Gastrocnemius medialis (tissue), 4 donors: ENCODE measurements at regions of chrX and their contacts with region 1.

Region 1: GRCh38 chrX:104098151-104098808 is 14.0 kb upstream of the ZCCHC18 start:
- DNase-seq: peak; percentile 4 to 14
- ATAC-seq: peak in 1 of 2 donors; percentile 60
- H3K4me3 ChIP-seq: no peak overlapping the region
- H3K27ac ChIP-seq: no peak overlapping the region
- H3K4me1 ChIP-seq: no peaks in the 10 kb centered on the region
- H3K27me3 ChIP-seq: peaks cover 0 to 7% (median 0%) of the 10 kb centered on the region in 3 donors
- CTCF ChIP-seq: peak; percentile 48 to 70 (median 52)
- POLR2A ChIP-seq: no peak

Region 2: GRCh38 chrX:104113222-104113965 is 15.1 kb after region 1 on chrX:
- in situ Hi-C with region 1: no loop called
- intact Hi-C with region 1: loop called (anchors 2 kb)
- DNase-seq: peak; percentile 2 to 21
- ATAC-seq: peak; percentile 75 to 76
- H3K4me3 ChIP-seq: peak overlapping the region; percentile 46 to 68 (median 58)
- H3K27ac ChIP-seq: no peak overlapping the region
- H3K4me1 ChIP-seq: no peaks in the 10 kb centered on the region
- H3K27me3 ChIP-seq: peaks cover 0 to 8% (median 3%) of the 10 kb centered on the region in 3 donors
- CTCF ChIP-seq: peak in 3 of 5 experiments; percentile 31 to 56 (median 43)
- POLR2A ChIP-seq: no peak